ENCODE measurements at regions of chr2 and their contacts with region 1.

Region 1: DNA sequence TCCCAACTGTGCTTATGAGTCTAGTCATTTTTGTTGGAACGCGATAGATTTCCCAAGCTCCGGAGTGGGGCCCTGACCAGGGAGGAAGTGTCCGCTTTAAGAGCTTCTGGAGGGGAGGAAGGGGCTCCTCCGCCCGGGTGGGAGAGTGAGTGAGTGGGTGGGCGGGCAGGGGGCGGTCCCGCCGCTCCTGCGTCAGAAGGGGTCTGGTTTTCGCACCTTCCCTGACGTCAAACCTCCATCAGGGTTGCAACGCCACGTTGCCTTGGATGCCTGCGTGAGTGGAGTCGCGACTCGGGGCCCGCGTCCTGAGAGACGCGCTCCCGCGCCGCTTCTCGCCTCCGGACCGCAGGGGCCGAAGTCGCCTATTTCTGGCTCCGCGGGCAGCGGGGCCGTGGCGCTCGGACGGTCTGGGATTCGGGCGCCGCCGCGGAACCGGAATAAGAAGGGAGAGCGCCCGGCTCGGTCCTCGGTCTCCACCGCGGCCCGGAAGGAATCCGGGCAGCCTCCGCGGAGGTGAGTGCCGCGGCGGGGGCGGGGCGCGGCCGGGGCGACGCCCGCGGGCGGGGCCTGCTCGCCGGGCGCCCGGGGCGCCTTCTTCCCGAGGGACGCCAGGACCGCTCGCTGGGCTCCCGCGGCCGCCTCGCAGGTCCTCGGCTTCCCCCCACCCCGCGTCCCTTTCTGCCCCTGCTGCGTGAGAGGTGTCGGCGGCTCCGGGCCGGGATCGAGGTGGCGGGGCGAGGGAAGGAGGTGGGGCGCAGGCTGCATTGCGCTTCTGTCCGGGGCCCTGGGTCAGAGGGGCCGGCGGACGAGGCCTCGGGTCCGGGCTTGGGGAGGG is at the start of gene ZDBF2:
- H3K4me3 Mint-ChIP-seq: peak within 1 kb of the TSS; percentile 80
- H3K27ac Mint-ChIP-seq: no peak within 1 kb of the TSS
- H3K4me1 Mint-ChIP-seq: no peaks in the 10 kb centered on the region
- H3K27me3 Mint-ChIP-seq: peaks cover 70% of the 10 kb centered on the region

Region 2: GRCh38 chr2:206305523-206306245 is 31.0 kb after region 1 on chr2:
- intact Hi-C with region 1: no loop called
- H3K4me3 Mint-ChIP-seq: no peak overlapping the region
- H3K27ac Mint-ChIP-seq: no peak overlapping the region
- H3K4me1 Mint-ChIP-seq: no peaks in the 10 kb centered on the region
- H3K27me3 Mint-ChIP-seq: no peaks in the 10 kb centered on the region

Region 3: DNA sequence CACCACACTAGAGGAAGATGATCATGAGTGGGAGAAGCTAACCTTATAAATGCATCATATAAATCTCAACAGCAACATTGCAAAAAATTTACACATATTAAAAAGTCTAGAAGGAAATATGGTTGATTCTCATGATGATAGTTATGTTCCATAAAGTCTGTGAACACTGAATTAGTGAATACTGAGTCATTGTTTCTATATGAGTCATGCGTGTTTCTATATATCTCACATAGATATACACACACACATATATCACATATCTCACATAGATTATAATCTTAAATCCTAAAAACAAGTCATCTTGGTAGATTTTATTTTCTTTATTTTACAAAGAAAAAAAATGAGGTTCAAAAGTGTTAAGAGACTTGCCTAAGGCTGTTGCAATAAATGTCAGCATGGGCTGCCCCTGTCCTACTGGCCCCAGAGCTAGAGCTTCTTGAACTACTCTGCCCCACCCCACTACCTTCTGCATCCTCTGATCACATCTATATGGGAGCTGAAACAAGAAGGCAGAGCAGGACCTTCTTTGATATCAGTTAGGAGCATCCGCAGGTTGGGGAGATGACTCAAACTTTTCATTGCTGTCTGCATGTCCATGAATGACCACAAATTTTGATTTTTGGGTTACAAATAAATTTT is 86.9 kb after region 1 on chr2:
- intact Hi-C with region 1: loop called (anchors 10 kb)
- H3K4me3 Mint-ChIP-seq: no peak overlapping the region
- H3K27ac Mint-ChIP-seq: no peak overlapping the region
- H3K4me1 Mint-ChIP-seq: no peaks in the 10 kb centered on the region
- H3K27me3 Mint-ChIP-seq: peaks cover 2% of the 10 kb centered on the region

Measured in dendritic cell treated with granulocyte-macrophage colony-stimulating factor and Interleukin-4, amounts not matched to agents 40 ng/mL and 50 ng/mL, for 4 days (primary cell).